ENCODE measurements at regions of chr3 and their contacts with region 1.

Region 1: DNA sequence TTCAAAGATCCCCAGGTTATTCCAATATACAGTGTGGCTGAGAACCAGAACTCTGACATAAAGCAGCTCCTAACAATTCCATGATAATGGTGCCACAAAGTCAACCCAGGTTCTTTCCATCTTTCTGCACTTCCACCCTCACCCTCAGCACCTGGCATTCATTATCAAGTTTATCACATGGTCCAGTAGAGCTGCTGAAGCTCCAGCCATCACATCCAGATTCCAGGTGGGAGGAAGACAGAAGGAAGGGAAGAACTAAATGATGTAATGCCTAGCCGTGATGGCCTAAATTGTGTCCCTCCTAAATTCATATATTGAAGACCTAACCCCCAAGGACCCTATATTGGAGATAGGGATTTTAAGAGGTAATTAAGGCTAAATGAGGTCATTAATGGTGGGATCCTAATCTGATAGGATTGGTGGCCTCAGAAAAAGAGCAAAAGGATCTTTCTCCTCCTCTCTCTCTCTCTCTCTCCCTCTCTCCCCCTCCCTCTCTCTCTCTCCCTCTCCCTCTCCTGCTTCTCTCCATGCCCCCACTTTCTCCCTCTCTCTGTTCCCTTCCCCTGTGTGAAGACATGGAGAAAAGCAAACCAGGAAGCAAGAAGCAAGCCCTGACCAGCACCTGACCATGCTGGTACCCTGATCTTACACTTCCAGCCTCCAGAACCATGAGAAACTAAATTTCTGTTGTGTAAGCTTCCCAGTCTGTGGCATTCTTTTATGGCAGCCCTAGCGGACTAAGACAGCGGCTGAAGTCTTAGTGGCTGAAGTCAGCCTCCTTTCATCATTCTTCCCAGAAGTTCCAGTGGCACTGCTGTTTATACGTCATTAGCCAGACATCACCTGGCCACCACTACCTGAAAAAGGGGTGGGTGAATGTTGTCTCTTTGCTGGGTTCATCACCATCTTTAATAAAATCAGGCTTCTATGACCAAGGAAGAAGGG is 369.7 kb upstream of the PROK2 start:
- DNase-seq: no peak
- H3K4me3 ChIP-seq: no peak overlapping the region
- H3K27ac ChIP-seq: no peak overlapping the region
- H3K4me1 ChIP-seq: no peaks in the 10 kb centered on the region
- H3K27me3 ChIP-seq: no peaks in the 10 kb centered on the region
- CTCF ChIP-seq: no peak

Region 2: GRCh38 chr3:72041511-72041910 is 113.2 kb before region 1 on chr3:
- CTCF ChIA-PET with region 1: interaction called, 10 read pairs
- dilution Hi-C with region 1: no loop called
- in situ Hi-C with region 1: no loop called
- intact Hi-C with region 1: no loop called
- DNase-seq: no peak
- H3K4me3 ChIP-seq: no peak overlapping the region
- H3K27ac ChIP-seq: no peak overlapping the region
- H3K4me1 ChIP-seq: no peaks in the 10 kb centered on the region
- H3K27me3 ChIP-seq: no peaks in the 10 kb centered on the region
- CTCF ChIP-seq: peak in 1 of 2 donors; percentile 8

Region 3: GRCh38 chr3:72299321-72299802 is 144.7 kb after region 1 on chr3:
- CTCF ChIA-PET with region 1: no interaction called
- dilution Hi-C with region 1: no loop called
- in situ Hi-C with region 1: no loop called
- intact Hi-C with region 1: no loop called
- DNase-seq: peak; percentile 11
- H3K4me3 ChIP-seq: no peak overlapping the region
- H3K27ac ChIP-seq: no peak overlapping the region
- H3K4me1 ChIP-seq: no peaks in the 10 kb centered on the region
- H3K27me3 ChIP-seq: no peaks in the 10 kb centered on the region
- CTCF ChIP-seq: no peak